Endothelial cell of umbilical vein (primary cell): ENCODE measurements at regions of chr1 and their contacts with region 1.

Region 1: DNA sequence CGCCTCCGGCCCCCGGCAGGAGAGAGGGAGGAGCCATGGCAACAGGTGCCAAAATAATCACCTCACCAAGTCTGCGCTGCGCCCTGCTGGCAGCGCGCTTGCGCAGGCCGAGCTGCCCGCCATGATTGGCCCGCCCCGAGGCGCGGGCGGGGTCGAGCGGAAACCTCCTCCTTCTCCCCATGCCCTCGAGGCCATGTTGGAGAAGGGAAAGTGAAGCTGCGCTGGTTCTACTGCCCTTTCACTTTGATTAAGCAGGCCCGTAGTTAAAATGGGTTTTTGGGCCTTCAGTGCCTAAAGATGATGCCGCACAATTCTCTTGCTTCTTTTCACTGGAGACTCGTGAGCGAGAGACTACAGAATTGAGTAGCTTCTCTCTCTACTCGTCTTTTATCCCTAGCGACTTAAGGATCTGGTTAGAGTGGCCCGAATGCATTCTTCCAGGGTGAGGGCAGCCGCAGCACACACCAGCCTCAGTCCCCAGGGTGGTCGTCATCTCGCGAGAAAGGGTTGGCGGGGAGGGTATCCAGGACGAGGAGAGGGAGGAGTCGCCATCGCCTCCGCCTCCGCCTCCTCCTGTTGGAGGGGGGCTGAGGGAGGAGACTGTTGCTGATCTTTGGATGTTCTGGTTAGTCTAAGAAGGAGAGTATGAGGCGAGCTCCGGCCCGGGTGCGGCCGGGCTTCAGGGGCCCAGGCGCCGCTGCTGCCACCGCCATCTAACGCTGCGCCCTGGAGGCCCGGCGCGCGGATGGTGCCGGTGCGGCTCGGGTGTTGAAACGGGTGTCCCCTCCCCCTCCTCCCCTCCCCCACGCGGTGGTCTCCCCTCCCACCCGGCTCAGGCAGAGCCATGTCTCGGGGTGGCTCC is at the start of gene DCAF6:
- DNase-seq: peak; percentile 99
- H3K4me3 ChIP-seq: peak within 1 kb of the TSS; percentile 87 to 95 (median 93)
- H3K27ac ChIP-seq: peak within 1 kb of the TSS; percentile 93
- H3K4me1 ChIP-seq: peaks cover 18% of the 10 kb centered on the region
- H3K27me3 ChIP-seq: no peaks in the 10 kb centered on the region
- CTCF ChIP-seq: no peak
- POLR2A ChIP-seq: peak; percentile 89
- total RNA-seq, gene DCAF6: 38.7 and 39.4 TPM in 2 replicates

Region 2: DNA sequence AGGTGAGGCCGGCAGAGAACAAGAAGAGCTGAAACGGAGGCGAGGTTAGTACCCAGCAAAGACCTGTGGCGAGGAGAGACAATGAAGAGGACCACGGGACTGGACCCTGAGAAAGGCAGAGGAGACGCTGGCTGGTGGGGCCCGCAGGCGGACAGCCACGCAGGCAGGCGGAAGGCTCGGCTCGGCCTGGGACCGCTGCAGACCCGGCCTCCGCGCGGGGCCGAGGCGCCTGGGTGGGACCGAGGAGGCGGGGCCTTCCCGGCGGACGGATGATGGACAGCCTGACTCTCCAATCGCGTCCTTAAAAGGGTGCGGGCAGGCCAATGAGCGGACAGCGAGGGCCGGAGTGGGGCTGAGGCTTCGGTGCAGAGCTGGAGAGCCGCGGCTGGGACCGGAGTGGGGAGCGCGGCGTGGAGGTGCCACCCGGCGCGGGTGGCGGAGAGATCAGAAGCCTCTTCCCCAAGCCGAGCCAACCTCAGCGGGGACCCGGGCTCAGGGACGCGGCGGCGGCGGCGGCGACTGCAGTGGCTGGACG is 214.6 kb before region 1 on chr1 and contains the start of gene MPZL1:
- CTCF ChIA-PET with region 1: no interaction called
- POLR2A ChIA-PET with region 1: no interaction called
- dilution Hi-C with region 1: no loop called
- intact Hi-C with region 1: loop called (anchors 1 kb)
- DNase-seq: peak; percentile 96
- H3K4me3 ChIP-seq: peak within 1 kb of the TSS; percentile 59 to 97 (median 72)
- H3K27ac ChIP-seq: peak within 1 kb of the TSS; percentile 72
- H3K4me1 ChIP-seq: peaks cover 26% of the 10 kb centered on the region
- H3K27me3 ChIP-seq: no peaks in the 10 kb centered on the region
- CTCF ChIP-seq: no peak
- POLR2A ChIP-seq: peak; percentile 61
- total RNA-seq, gene MPZL1: 99.1 and 99.4 TPM in 2 replicates

Region 3: GRCh38 chr1:167819849-167820683 is 116.2 kb before region 1 on chr1:
- CTCF ChIA-PET with region 1: interaction called, 4 read pairs
- POLR2A ChIA-PET with region 1: no interaction called
- dilution Hi-C with region 1: no loop called
- intact Hi-C with region 1: loop called (anchors 1 kb)
- DNase-seq: peak; percentile 82
- H3K4me3 ChIP-seq: peak overlapping the region in 1 of 3 experiments; percentile 16
- H3K27ac ChIP-seq: peak overlapping the region; percentile 69
- H3K4me1 ChIP-seq: peaks cover 7% of the 10 kb centered on the region
- H3K27me3 ChIP-seq: no peaks in the 10 kb centered on the region
- CTCF ChIP-seq: no peak
- POLR2A ChIP-seq: no peak

Region 4: GRCh38 chr1:167964646-167965045 is 28.3 kb after region 1 on chr1:
- CTCF ChIA-PET with region 1: no interaction called
- POLR2A ChIA-PET with region 1: no interaction called
- dilution Hi-C with region 1: no loop called
- intact Hi-C with region 1: loop called (anchors 1 kb)
- DNase-seq: peak; percentile 71
- H3K4me3 ChIP-seq: no peak overlapping the region
- H3K27ac ChIP-seq: no peak overlapping the region
- H3K4me1 ChIP-seq: peaks cover 17% of the 10 kb centered on the region
- H3K27me3 ChIP-seq: no peaks in the 10 kb centered on the region
- CTCF ChIP-seq: no peak
- POLR2A ChIP-seq: no peak

Region 5: DNA sequence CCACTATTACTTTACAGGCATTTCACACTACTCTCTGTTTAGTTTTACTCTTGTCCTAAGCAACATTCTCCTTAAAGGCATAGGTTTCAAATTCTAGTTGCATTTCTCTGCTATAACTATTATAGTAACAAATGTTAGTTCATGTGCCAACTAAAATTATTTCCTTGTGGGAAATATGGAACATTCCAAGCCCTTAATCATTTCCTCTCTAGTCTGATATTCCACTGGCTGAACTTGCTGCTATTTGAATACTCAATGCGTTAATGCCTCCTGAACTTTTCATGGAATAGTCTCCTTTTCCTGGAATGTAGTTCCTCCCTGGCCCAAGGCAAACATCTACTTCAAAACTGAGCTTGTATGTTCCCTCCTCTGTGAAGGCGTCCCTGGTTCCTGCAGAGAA is 325.1 kb after region 1 on chr1:
- CTCF ChIA-PET with region 1: no interaction called
- POLR2A ChIA-PET with region 1: no interaction called
- dilution Hi-C with region 1: no loop called
- intact Hi-C with region 1: loop called (anchors 1 kb)
- DNase-seq: peak; percentile 90
- H3K4me3 ChIP-seq: peak overlapping the region in 1 of 3 experiments; percentile 39
- H3K27ac ChIP-seq: peak overlapping the region; percentile 84
- H3K4me1 ChIP-seq: peaks cover 28% of the 10 kb centered on the region
- H3K27me3 ChIP-seq: no peaks in the 10 kb centered on the region
- CTCF ChIP-seq: no peak
- POLR2A ChIP-seq: no peak